ENCODE measurements at regions of chr2 and their contacts with region 1.

Region 1: GRCh38 chr2:138373993-138374408 is 127.6 kb upstream of the SPOPL start:
- DNase-seq: peak; percentile 59
- ATAC-seq: peak; percentile 56; the same call in 1 of the 2 replicates
- H3K4me3 ChIP-seq: no peak overlapping the region
- H3K27ac ChIP-seq: no peak overlapping the region
- H3K4me1 ChIP-seq: no peaks in the 10 kb centered on the region
- H3K27me3 ChIP-seq: no peaks in the 10 kb centered on the region
- CTCF ChIP-seq: peak; percentile 89

Region 2: GRCh38 chr2:137947728-137948336 is 426.2 kb before region 1 on chr2:
- CTCF ChIA-PET with region 1: no interaction called
- POLR2A ChIA-PET with region 1: no interaction called
- intact Hi-C with region 1: loop called (anchors 1 kb)
- DNase-seq: peak; percentile 84
- ATAC-seq: peak; percentile 63
- H3K4me3 ChIP-seq: no peak overlapping the region
- H3K27ac ChIP-seq: no peak overlapping the region
- H3K4me1 ChIP-seq: peaks cover 6% of the 10 kb centered on the region
- H3K27me3 ChIP-seq: no peaks in the 10 kb centered on the region
- CTCF ChIP-seq: peak; percentile 88

Region 3: DNA sequence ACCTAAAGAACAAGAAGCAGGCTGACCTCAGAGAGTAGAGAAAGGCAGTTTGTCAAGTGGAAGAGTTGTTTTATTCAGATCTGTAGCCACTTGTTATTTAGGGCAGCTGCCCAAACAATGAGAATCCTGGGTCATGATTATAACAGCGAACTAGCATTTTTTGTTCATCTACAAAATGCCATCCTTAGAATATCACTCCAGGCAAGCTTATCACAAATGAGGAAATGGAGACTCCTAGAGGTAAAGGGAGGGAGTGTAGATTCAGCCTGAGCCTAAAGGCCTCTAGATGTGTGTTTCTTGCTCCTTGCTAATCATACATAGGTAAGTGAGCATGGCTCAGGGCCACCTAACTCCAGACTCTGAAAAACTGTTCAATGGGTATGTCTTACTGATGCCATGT is 283.7 kb before region 1 on chr2:
- CTCF ChIA-PET with region 1: interaction called, 4 read pairs
- POLR2A ChIA-PET with region 1: no interaction called
- intact Hi-C with region 1: loop called (anchors 5 kb)
- DNase-seq: peak; percentile 72
- ATAC-seq: peak; percentile 72
- H3K4me3 ChIP-seq: no peak overlapping the region
- H3K27ac ChIP-seq: no peak overlapping the region
- H3K4me1 ChIP-seq: peaks cover 15% of the 10 kb centered on the region
- H3K27me3 ChIP-seq: no peaks in the 10 kb centered on the region
- CTCF ChIP-seq: peak; percentile 85

Region 4: GRCh38 chr2:138275881-138276280 is 98.1 kb before region 1 on chr2:
- CTCF ChIA-PET with region 1: no interaction called
- POLR2A ChIA-PET with region 1: no interaction called
- intact Hi-C with region 1: loop called (anchors 2 kb)
- DNase-seq: peak; percentile 88
- ATAC-seq: peak; percentile 91
- H3K4me3 ChIP-seq: peak overlapping the region; percentile 18; the same call in 1 of the 2 replicates
- H3K27ac ChIP-seq: peak overlapping the region; percentile 95
- H3K4me1 ChIP-seq: peaks cover 25% of the 10 kb centered on the region
- H3K27me3 ChIP-seq: no peaks in the 10 kb centered on the region
- CTCF ChIP-seq: no peak

Region 5: GRCh38 chr2:138712212-138712979 is 338.4 kb after region 1 on chr2:
- CTCF ChIA-PET with region 1: no interaction called
- POLR2A ChIA-PET with region 1: no interaction called
- intact Hi-C with region 1: loop called (anchors 10 kb)
- DNase-seq: peak; percentile 40
- ATAC-seq: peak; percentile 35; the same call in 1 of the 2 replicates
- H3K4me3 ChIP-seq: no peak overlapping the region
- H3K27ac ChIP-seq: no peak overlapping the region
- H3K4me1 ChIP-seq: peaks cover 10% of the 10 kb centered on the region
- H3K27me3 ChIP-seq: no peaks in the 10 kb centered on the region
- CTCF ChIP-seq: no peak

Region 6: DNA sequence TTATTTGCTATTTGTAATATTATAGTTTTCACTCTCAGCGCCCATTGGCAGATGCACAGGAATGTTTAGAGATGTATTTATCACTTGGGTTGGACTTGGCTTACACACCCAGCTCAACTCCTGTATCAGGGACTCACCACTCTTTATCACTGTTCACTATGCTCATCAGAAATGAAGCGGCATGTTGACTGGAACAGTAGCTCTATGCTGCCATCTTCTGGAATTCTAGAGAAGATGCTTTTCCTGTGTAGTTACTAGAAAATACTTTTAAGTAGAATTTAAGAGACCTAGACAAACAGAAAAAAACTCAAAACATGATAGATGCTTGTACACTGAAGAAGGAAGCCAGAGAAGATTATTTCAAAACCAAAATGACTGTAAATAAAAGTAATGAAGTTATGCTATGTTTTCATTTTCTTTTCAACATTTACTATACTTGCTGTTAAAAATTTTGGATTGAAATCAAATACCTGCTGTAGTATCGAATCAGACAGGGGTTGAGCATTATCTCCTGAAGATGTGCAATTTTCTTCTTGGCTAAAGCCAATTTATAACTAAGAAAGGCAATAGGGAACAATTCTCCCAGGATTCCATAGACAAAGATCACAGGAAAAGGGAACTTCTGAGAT is 453.5 kb after region 1 on chr2:
- CTCF ChIA-PET with region 1: no interaction called
- POLR2A ChIA-PET with region 1: no interaction called
- intact Hi-C with region 1: loop called (anchors 2 kb)
- DNase-seq: peak; percentile 73
- ATAC-seq: peak; percentile 18; the same call in 1 of the 2 replicates
- H3K4me3 ChIP-seq: no peak overlapping the region
- H3K27ac ChIP-seq: no peak overlapping the region
- H3K4me1 ChIP-seq: peaks cover 33% of the 10 kb centered on the region
- H3K27me3 ChIP-seq: no peaks in the 10 kb centered on the region
- CTCF ChIP-seq: peak; percentile 83